ENCODE measurements at regions of chr7 and their contacts with region 1.

Region 1: GRCh38 chr7:91201442-91202113 is 62.7 kb upstream of the FZD1 start:
- DNase-seq: no peak
- H3K4me3 ChIP-seq: no peak overlapping the region
- H3K27ac ChIP-seq: no peak overlapping the region
- H3K4me1 ChIP-seq: no peaks in the 10 kb centered on the region
- H3K27me3 ChIP-seq: no peaks in the 10 kb centered on the region
- CTCF ChIP-seq: no peak
- POLR2A ChIP-seq: no peak

Region 2: DNA sequence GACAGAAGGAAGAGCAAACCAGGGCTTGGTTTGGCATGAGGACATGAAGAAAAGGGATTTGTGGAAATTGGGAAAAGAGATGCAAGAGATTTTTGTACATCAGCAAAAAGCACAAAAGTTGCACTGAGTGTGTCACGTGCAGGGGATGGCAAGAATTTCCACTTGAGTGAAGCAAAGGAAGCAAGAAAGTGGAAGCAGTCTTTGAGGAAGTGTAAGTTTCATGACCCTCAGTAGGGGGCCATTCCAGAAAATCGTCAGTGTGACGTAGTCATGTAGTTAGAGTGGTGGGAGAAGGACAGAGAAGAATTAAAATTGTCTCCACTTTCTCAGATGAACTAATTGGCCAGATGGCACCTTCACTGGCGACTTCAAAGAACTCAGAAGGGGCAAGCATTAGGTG is 60.6 kb before region 1 on chr7:
- intact Hi-C with region 1: no loop called
- DNase-seq: no peak
- H3K4me3 ChIP-seq: no peak overlapping the region
- H3K27ac ChIP-seq: no peak overlapping the region
- H3K4me1 ChIP-seq: no peaks in the 10 kb centered on the region
- H3K27me3 ChIP-seq: no peaks in the 10 kb centered on the region
- CTCF ChIP-seq: no peak
- POLR2A ChIP-seq: no peak

Region 3: DNA sequence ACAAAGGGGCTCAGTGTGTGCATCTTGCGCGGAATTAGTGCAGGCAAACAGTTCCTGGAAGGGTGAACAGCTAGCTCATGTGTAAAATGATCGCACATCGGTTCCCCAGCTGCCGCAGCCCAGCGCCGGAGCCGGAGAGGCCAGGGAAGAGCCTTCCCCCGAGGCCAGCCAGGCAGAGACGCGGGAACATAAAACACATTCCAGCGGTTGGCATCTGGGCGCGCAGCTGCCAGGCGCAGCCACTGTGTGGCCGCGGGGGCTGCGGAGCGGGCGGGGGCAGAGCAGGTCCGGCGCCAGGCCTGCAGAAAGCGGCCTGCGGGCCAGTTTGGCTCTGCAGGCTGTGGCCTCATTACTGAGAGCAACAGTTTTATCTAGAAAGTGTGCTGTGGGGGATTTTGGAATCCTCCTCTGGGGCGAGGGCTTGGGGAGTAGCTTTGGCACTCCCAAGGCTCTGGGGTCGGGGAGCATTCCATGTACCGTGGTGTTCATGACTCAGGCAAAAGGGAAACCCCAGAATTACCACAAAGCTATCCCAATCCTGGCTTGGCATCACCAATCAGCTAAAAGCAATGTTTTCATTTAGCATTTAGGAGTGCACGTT is 1841.9 kb after region 1 on chr7:
- intact Hi-C with region 1: loop called (anchors 10 kb)
- DNase-seq: peak in 1 of 2 donors; percentile 22
- H3K4me3 ChIP-seq: peak overlapping the region; percentile 29 to 60 (median 44)
- H3K27ac ChIP-seq: no peak overlapping the region
- H3K4me1 ChIP-seq: no peaks in the 10 kb centered on the region
- H3K27me3 ChIP-seq: no peaks in the 10 kb centered on the region
- CTCF ChIP-seq: no peak
- POLR2A ChIP-seq: no peak

Measured in breast epithelium (tissue), 4 donors.